ENCODE measurements at regions of chr1 and their contacts with region 1.

Region 1: DNA sequence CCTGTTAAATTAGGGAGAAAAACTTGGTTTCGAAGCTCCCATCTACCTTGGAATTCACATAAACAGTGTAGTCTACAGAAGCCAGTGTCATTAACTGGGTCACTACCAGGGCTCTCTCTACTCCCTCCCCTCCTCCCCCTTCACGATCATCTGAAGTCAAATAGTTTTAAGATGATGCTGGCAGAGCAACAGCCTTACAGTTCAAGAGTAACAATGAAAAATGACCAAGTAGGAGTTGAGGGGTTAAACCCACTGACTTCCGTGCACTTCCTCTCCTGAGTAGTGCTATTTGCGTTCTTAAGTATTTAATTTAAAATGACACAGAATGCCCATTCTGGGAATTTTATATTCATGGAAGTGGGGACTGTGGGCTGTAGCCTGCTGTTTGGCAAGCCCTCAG is 236.9 kb downstream of the SIPA1L2 start:
- DNase-seq: no peak
- H3K4me3 ChIP-seq: no peak overlapping the region
- H3K27ac ChIP-seq: no peak overlapping the region
- H3K4me1 ChIP-seq: no peaks in the 10 kb centered on the region
- H3K27me3 ChIP-seq: no peaks in the 10 kb centered on the region
- CTCF ChIP-seq: no peak

Region 2: DNA sequence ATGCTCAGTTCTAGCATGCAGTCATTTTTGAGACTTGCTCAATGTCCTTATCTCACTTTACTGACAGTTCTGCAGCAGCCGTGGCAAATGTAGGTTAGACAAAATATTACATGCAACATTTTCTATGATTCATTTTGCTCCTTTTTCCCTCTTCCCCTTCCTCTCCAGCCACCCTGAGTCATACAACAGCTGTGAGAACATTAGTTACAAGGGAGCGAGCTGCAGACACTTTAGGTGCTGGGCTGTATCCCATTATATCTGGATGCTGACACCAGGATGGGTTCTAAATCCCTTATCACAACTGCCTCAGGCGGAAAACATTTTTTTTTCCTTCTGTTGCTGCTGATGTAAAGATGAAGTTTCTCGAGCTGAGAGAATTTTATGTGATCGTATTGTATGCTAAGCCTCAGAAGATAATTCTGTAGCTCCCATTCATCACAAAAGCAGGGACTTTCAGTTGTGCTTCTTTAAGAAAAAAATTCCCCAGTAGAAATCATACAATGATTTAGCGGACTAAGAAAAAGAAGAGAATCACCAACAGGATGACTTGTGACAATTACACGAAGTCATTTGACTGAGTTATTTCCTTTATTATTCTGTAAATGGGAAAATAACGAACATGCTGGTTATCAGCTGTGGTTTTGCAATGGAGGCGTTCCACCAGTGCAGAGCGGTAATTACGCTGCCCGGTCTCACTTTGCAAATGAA is 421.5 kb before region 1 on chr1:
- CTCF ChIA-PET with region 1: interaction called, 12 read pairs
- dilution Hi-C with region 1: no loop called
- in situ Hi-C with region 1: no loop called
- intact Hi-C with region 1: no loop called
- DNase-seq: peak; percentile 45
- H3K4me3 ChIP-seq: no peak overlapping the region
- H3K27ac ChIP-seq: no peak overlapping the region
- H3K4me1 ChIP-seq: no peaks in the 10 kb centered on the region
- H3K27me3 ChIP-seq: peaks cover 2% of the 10 kb centered on the region
- CTCF ChIP-seq: no peak

Measured in mammary epithelial cell (primary cell).